Left cardiac atrium (tissue), 4 donors: ENCODE measurements at regions of chr4 and their contacts with region 1.

Region 1: GRCh38 chr4:73662709-73663546 is 42.7 kb upstream of the RASSF6 start:
- DNase-seq: no peak
- ATAC-seq: peak; percentile 34 to 60

Region 2: DNA sequence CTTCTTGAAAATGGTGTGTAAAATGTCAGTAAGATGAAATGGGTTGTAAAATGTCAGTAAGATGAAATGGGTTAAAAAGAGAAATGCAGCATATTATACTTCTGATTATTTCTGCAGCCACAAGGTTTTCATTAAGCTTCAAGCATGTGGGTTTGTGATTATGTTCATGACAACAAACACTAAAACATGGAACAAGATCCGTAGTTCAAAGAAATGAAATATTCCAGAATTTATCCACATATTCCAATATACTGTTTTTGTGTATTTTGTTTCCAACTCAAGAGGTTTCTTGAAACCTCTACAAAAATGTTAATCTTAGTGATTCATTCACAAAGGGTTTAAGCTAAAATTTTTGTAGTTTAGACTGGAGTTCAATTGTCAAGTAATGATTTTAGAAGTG is 1177.9 kb before region 1 on chr4:
- intact Hi-C with region 1: no loop called
- DNase-seq: no peak
- ATAC-seq: no peak

Region 3: GRCh38 chr4:73539386-73539785 is 123.5 kb before region 1 on chr4:
- intact Hi-C with region 1: no loop called
- DNase-seq: no peak
- ATAC-seq: no peak

Region 4: GRCh38 chr4:73922766-73923630 is 260.1 kb after region 1 on chr4:
- intact Hi-C with region 1: loop called in 1 of 2 experiments (anchors 5 kb)
- DNase-seq: no peak
- ATAC-seq: no peak